Activated CD4-positive, alpha-beta T cell treated with anti-CD3 and anti-CD28 coated beads, Interleukin-2, amount 10 ng/mL, durations not matched to agents 7 days and 5 days (primary cell): ENCODE measurements at regions of chr7 and their contacts with region 1.

Region 1: DNA sequence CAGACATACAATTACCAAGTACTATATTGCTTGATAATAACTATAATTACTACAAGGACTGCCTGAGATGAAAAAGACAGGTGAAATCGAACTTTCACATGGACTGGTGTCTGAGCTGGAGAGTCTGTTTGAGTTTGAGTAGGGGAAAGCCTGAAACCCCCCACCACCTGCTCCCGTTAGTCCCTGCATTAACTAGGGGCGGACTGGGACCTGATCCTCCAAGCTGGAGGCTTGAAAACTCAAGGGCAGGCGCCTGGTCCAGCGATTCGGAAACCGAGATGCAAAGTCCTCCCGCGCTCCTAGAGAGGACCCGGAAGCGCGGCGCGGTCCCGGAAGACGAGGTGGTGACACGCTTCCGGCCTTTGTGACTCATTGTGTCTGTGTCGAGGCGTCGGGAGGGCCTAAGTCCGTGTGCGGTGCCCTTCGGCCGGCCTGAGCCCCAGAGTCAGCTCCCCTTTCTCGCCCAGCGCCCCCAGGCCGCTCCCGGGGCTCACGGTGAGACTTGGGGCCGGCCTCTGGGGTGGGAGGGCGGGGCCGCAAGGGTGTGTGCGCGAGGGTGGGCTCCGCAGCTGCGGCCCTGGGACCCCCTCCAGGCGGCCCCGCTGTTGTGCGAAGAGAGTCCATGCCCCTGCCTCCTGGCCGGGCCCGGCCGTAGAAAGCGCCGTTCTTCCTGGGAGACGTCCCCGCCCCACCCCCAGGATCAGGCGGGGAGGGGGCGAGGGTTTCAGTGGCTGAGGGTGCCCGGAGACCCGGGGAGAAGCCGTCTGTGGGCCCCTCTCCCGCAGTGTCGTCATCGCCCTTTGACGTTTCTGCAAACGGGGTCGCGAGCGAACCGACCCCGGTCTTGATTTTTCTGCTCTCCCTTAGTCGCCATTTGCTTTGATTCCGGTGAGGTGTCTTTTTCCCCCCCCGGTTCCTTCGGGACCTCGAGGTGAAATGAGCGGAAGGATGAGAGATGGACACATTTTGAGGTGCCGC is at the start of gene ZKSCAN1:
- DNase-seq: peak; percentile 88
- H3K4me3 Mint-ChIP-seq: peak within 1 kb of the TSS; percentile 95
- H3K27ac Mint-ChIP-seq: peak within 1 kb of the TSS; percentile 96
- H3K4me1 Mint-ChIP-seq: peaks cover 48% of the 10 kb centered on the region
- H3K27me3 Mint-ChIP-seq: no peaks in the 10 kb centered on the region
- total RNA-seq, gene ZKSCAN1: 63.2 to 66.0 TPM

Region 2: DNA sequence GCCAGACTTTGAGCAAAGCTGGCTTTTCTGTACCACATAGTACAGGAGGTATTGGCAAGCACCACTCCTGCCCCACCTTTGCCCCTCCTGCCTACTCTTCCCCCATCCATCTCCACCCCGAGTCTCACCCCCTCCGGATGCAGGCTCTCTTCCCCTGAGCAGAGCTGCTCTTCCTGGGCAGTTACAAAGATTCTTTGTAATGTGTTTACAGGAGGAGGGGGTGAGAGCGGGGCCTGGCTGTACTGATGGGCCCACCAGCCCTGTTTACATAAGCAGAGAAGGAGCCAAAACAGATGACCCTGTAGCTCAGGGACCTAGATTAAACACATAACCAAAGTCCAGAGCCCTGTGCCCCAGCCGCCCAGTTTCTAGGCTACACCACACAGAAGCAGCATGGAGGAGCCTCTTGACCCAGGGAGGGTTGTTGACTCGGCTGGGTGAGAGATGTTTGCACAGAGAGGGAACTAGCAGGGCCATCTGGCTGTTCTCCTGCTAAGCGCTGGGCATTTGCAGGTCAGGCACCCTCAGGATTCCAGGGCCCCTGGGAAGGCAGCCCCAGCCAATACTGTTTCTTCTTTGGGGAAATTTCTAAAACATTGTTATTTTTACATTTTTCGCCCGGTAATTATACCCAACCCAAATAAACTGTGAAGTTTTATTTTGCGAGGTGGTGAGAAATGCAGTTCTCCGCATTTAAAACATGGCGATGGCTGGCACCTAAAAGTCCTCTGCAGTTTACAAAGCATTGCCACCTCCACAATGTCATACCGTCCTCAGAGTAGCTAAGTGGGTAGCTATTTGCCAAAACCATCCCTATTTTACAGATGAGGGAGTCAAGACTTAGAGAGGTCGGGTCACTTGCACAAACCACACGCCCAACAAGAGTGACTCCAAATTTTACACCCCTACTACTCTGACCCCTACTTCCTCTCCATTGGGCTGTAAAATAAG is 11.5 kb before region 1 on chr7:
- CTCF ChIA-PET with region 1: interaction called, 11 read pairs
- POLR2A ChIA-PET with region 1: no interaction called
- DNase-seq: no peak
- H3K4me3 Mint-ChIP-seq: no peak overlapping the region
- H3K27ac Mint-ChIP-seq: peak overlapping the region; percentile 3
- H3K4me1 Mint-ChIP-seq: peaks cover 6% of the 10 kb centered on the region
- H3K27me3 Mint-ChIP-seq: no peaks in the 10 kb centered on the region

Region 3: DNA sequence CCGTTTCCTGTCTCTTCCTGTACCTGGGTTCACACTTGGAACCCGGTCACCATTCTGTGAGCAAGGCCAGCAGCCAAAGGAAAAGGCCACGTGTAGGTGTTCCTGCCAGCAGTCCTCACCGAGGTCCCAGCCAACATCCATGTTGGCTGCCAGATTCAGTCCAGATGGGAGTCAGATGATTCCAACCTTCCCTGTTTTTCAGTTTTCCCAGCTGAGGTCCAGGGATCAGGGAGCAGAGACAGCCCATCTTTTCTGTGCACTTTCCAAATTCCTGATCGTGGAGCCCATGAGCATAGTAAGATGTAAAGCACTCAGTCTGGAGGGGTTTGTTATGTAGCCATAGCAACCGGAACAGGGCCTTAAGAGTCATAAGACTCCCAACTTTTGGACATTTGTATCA is 200.4 kb after region 1 on chr7:
- CTCF ChIA-PET with region 1: no interaction called
- POLR2A ChIA-PET with region 1: no interaction called
- DNase-seq: no peak
- H3K4me3 Mint-ChIP-seq: no peak overlapping the region
- H3K27ac Mint-ChIP-seq: no peak overlapping the region
- H3K4me1 Mint-ChIP-seq: peaks cover 64% of the 10 kb centered on the region
- H3K27me3 Mint-ChIP-seq: no peaks in the 10 kb centered on the region